ENCODE measurements at regions of chr21 and their contacts with region 1.

Region 1: DNA sequence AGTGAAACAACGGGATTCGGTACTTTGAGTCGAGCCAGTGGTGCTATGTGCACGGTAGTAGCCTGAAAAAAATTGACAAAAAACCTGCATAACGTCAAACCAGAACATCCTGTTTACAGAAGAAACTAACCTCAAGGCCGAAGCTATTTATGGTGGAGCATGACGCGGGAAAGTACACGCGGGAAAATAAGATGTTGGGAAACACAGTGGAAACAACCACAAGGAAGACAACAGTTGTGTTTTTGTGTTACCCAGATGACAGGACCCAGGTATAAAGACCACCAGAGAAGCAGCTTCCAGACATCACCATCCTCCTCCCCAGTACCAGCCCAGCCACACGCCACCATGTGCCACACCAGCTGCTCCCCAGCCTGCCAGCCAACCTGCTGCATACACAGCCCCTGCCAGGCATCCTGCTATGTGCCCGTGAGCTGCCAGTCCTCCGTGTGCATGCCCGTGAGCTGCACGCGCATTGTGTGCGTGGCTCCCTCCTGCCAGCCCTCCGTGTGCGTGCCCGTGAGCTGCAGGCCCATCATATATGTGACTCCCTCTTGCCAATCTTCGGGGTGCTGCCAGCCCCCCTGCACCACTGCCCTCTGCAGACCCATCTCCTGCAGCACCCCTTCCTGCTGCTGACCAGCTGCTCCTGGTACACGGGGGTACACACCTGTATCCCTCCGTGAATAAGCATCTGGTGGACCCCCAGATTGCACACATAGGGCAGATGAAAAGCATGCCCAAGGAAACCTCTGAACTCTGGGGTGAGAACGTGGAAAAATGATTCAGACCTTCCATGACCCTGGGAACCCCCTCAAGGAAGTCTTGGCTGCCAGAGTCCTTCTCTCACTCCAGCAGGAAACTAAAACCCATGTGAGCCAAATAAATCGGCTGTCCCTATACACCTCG is at the start of gene KRTAP12-3:
- DNase-seq: peak in 8 of 9 donors; percentile 39 to 92 (median 86)
- ATAC-seq: peak; percentile 83
- H3K4me3 ChIP-seq: peak within 1 kb of the TSS; percentile 46
- H3K4me3 Mint-ChIP-seq: peak within 1 kb of the TSS; percentile 63 to 87 (median 76)
- H3K27ac ChIP-seq: peak within 1 kb of the TSS; percentile 63
- H3K27ac Mint-ChIP-seq: peak within 1 kb of the TSS; percentile 87 to 98 (median 98)
- H3K4me1 ChIP-seq: peaks cover 55 to 64% of the 10 kb centered on the region in 2 donors
- H3K4me1 Mint-ChIP-seq: peaks cover 47 to 73% (median 69%) of the 10 kb centered on the region in 7 donors
- H3K27me3 ChIP-seq: no peaks in the 10 kb centered on the region
- H3K27me3 Mint-ChIP-seq: peaks cover 0 to 9% (median 0%) of the 10 kb centered on the region in 5 donors
- total RNA-seq, gene KRTAP12-3: 1.1 TPM in 1 of 5 experiments, not detected in the others

Region 2: DNA sequence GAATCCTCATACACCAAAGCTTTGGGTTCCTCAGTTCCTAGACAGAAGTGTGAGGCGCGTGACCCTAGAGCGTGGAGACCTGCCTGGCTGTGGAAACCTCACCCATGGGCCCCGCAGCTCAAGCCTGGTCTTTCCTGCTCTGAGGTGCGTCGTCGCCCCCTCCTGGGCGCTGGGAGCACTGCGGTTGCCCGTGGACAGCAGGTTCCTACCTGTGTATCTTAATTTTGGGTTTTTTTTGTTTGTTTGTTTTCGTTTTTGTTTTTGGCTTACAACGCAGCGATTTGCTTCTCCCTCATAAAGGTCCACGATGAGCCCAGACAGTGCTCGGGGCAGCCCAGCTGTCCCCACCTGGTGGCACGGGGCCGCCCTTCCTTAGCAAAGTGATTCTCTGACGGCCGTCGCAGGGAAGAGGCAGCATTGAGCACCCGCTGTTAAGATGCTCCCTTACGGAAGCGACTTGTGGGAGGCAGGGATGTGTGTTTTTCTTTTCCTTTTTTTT is 682.3 kb before region 1 on chr21:
- CTCF ChIA-PET with region 1: no interaction called
- POLR2A ChIA-PET with region 1: no interaction called
- intact Hi-C with region 1: no loop called
- DNase-seq: peak; percentile 70 to 87 (median 81)
- ATAC-seq: peak; percentile 95
- H3K4me3 ChIP-seq: no peak overlapping the region
- H3K4me3 Mint-ChIP-seq: no peak overlapping the region
- H3K27ac ChIP-seq: no peak overlapping the region
- H3K27ac Mint-ChIP-seq: peak overlapping the region in 6 of 9 donors; percentile 0 to 94 (median 58)
- H3K4me1 ChIP-seq: peaks cover 0 to 4% of the 10 kb centered on the region in 2 donors
- H3K4me1 Mint-ChIP-seq: peaks cover 11 to 17% (median 15%) of the 10 kb centered on the region in 7 donors
- H3K27me3 ChIP-seq: no peaks in the 10 kb centered on the region
- H3K27me3 Mint-ChIP-seq: no peaks in the 10 kb centered on the region

Region 3: GRCh38 chr21:44510508-44511210 is 147.2 kb before region 1 on chr21:
- CTCF ChIA-PET with region 1: interaction called, 3 read pairs
- POLR2A ChIA-PET with region 1: interaction called, 3 read pairs
- intact Hi-C with region 1: loop called in 1 of 2 experiments (anchors 2 kb)
- DNase-seq: peak; percentile 65 to 95 (median 85)
- ATAC-seq: peak; percentile 87
- H3K4me3 ChIP-seq: peak overlapping the region; percentile 64
- H3K4me3 Mint-ChIP-seq: peak overlapping the region in 9 of 10 donors; percentile 58 to 75 (median 65)
- H3K27ac ChIP-seq: no peak overlapping the region
- H3K27ac Mint-ChIP-seq: peak overlapping the region in 3 of 9 donors; percentile 6 to 41 (median 38)
- H3K4me1 ChIP-seq: peaks cover 7 to 13% of the 10 kb centered on the region in 2 donors
- H3K4me1 Mint-ChIP-seq: peaks cover 0 to 3% (median 0%) of the 10 kb centered on the region in 7 donors
- H3K27me3 ChIP-seq: no peaks in the 10 kb centered on the region
- H3K27me3 Mint-ChIP-seq: no peaks in the 10 kb centered on the region

Region 4: DNA sequence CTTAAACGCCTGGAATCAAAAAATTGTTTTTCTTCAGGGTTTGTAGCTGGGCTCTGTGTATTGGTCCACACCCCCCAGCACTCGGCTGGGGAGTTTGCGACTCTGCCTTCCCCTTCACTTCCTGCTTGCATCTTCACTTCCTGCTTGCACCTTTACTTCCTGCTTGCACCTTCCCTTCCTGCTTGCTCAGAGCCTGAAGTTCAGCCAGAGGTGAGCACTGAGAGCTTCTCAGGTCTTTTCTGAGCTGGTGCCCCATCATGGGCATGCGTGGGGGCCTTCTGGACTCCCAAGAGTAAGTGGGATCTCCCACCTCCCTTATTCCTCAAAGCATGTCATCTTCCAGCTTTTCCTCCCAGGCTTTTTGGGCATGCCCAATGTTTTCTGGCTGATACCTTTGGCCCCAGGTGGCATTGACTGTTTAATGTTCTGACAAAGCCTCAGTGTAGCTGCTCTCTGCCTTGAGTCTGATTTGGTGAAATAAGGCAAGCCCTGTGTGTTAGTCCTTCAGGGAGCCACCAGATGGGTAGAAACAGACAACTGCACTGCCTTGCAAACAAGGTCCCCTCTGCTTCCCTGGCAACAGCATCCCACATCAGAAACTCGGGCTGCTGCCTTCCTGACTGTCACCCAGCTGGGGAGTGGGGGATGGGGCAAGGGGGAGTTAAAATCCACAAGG is 110.1 kb before region 1 on chr21:
- CTCF ChIA-PET with region 1: no interaction called
- POLR2A ChIA-PET with region 1: interaction called, 5 read pairs
- intact Hi-C with region 1: loop called in 1 of 2 experiments (anchors 2 kb)
- DNase-seq: peak in 8 of 9 donors; percentile 16 to 73 (median 59)
- ATAC-seq: peak; percentile 74
- H3K4me3 ChIP-seq: peak overlapping the region; percentile 50
- H3K4me3 Mint-ChIP-seq: peak overlapping the region; percentile 75 to 86 (median 83)
- H3K27ac ChIP-seq: peak overlapping the region; percentile 56
- H3K27ac Mint-ChIP-seq: peak overlapping the region; percentile 85 to 99 (median 95)
- H3K4me1 ChIP-seq: peaks cover 15 to 19% of the 10 kb centered on the region in 2 donors
- H3K4me1 Mint-ChIP-seq: peaks cover 16 to 34% (median 30%) of the 10 kb centered on the region in 7 donors
- H3K27me3 ChIP-seq: no peaks in the 10 kb centered on the region
- H3K27me3 Mint-ChIP-seq: peaks cover 0 to 5% (median 0%) of the 10 kb centered on the region in 5 donors

Region 5: GRCh38 chr21:44583089-44583799 is 74.6 kb before region 1 on chr21:
- CTCF ChIA-PET with region 1: no interaction called
- POLR2A ChIA-PET with region 1: no interaction called
- intact Hi-C with region 1: loop called in 1 of 2 experiments (anchors 10 kb)
- DNase-seq: no peak
- ATAC-seq: no peak
- H3K4me3 ChIP-seq: no peak overlapping the region
- H3K4me3 Mint-ChIP-seq: peak overlapping the region in 1 of 10 donors; percentile 13
- H3K27ac ChIP-seq: no peak overlapping the region
- H3K27ac Mint-ChIP-seq: peak overlapping the region in 3 of 9 donors; percentile 17 to 62 (median 22)
- H3K4me1 ChIP-seq: peaks cover 0 to 8% of the 10 kb centered on the region in 2 donors
- H3K4me1 Mint-ChIP-seq: peaks cover 14 to 43% (median 34%) of the 10 kb centered on the region in 7 donors
- H3K27me3 ChIP-seq: no peaks in the 10 kb centered on the region
- H3K27me3 Mint-ChIP-seq: peaks cover 0 to 39% (median 25%) of the 10 kb centered on the region in 5 donors

Region 6: GRCh38 chr21:44618504-44618903 is 39.4 kb before region 1 on chr21:
- CTCF ChIA-PET with region 1: interaction called, 9 read pairs
- POLR2A ChIA-PET with region 1: interaction called, 23 read pairs
- intact Hi-C with region 1: loop called (anchors 1 kb)
- DNase-seq: no peak
- ATAC-seq: peak; percentile 36
- H3K4me3 ChIP-seq: peak overlapping the region; percentile 53
- H3K4me3 Mint-ChIP-seq: peak overlapping the region; percentile 47 to 86 (median 70)
- H3K27ac ChIP-seq: peak overlapping the region; percentile 59
- H3K27ac Mint-ChIP-seq: peak overlapping the region; percentile 83 to 96 (median 93)
- H3K4me1 ChIP-seq: peaks cover 37 to 45% of the 10 kb centered on the region in 2 donors
- H3K4me1 Mint-ChIP-seq: peaks cover 20 to 66% (median 60%) of the 10 kb centered on the region in 7 donors
- H3K27me3 ChIP-seq: no peaks in the 10 kb centered on the region
- H3K27me3 Mint-ChIP-seq: no peaks in the 10 kb centered on the region

Region 7: GRCh38 chr21:44697811-44698734 is 40.2 kb after region 1 on chr21:
- CTCF ChIA-PET with region 1: no interaction called
- POLR2A ChIA-PET with region 1: no interaction called
- intact Hi-C with region 1: loop called in 1 of 2 experiments (anchors 5 kb)
- DNase-seq: no peak
- ATAC-seq: no peak
- H3K4me3 ChIP-seq: no peak overlapping the region
- H3K4me3 Mint-ChIP-seq: peak overlapping the region in 1 of 10 donors; percentile 42
- H3K27ac ChIP-seq: no peak overlapping the region
- H3K27ac Mint-ChIP-seq: peak overlapping the region in 1 of 9 donors; percentile 36
- H3K4me1 ChIP-seq: no peaks in the 10 kb centered on the region
- H3K4me1 Mint-ChIP-seq: peaks cover 2 to 21% (median 12%) of the 10 kb centered on the region in 7 donors
- H3K27me3 ChIP-seq: peaks cover 0 to 3% of the 10 kb centered on the region in 2 donors
- H3K27me3 Mint-ChIP-seq: peaks cover 53 to 73% (median 54%) of the 10 kb centered on the region in 5 donors

Region 8: DNA sequence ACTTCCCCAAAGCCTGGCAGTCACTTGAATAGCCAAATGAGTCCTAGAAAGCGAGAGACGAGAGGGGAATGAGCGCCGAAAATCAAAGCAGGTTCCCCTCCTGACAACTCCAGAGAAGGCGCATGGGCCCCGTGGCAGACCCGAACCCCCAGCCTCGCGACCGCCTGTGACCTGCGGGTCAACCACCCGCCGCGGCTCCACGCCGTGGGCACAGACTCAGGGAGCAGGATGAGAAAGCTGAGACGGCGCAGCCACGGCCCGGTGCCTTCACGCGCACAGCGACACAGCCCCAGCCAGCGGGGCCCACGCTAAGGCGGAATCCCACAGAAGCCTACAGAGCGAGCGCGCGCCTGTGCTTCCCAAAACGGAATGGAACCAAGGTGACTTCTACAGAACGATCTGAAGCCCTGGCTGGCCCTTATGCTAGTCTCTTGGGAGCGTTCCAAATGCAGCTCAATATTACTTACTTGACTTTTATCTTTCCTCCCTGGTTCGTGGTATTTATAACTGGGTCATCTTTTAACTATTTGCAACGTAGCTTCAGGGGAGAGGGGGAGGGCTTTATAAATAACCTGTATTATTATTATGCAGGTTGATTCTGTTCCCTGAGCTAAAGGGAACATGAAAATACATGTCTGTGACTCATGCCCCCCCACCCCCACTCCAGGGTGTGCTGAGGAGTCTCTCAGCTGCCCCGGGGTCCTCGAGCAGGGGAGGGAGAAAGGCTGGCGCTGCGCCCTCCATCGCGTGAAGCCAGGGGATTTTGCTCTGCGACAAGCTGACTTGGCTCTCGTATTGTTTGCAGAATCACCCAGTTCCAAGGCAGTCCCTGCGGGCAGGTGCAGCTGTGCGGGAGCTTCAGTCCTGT is 51.8 kb after region 1 on chr21:
- CTCF ChIA-PET with region 1: no interaction called
- POLR2A ChIA-PET with region 1: interaction called, 3 read pairs
- intact Hi-C with region 1: loop called in 1 of 2 experiments (anchors 1 kb)
- DNase-seq: peak in 2 of 9 donors; percentile 13 to 32
- ATAC-seq: peak; percentile 58
- H3K4me3 ChIP-seq: peak overlapping the region; percentile 20
- H3K4me3 Mint-ChIP-seq: peak overlapping the region; percentile 39 to 82 (median 72)
- H3K27ac ChIP-seq: no peak overlapping the region
- H3K27ac Mint-ChIP-seq: peak overlapping the region in 2 of 9 donors; percentile 9 to 23
- H3K4me1 ChIP-seq: peaks cover 25 to 34% of the 10 kb centered on the region in 2 donors
- H3K4me1 Mint-ChIP-seq: peaks cover 9 to 46% (median 27%) of the 10 kb centered on the region in 7 donors
- H3K27me3 ChIP-seq: peaks cover 8 to 32% of the 10 kb centered on the region in 2 donors
- H3K27me3 Mint-ChIP-seq: peaks cover 70 to 93% (median 79%) of the 10 kb centered on the region in 5 donors

Region 9: DNA sequence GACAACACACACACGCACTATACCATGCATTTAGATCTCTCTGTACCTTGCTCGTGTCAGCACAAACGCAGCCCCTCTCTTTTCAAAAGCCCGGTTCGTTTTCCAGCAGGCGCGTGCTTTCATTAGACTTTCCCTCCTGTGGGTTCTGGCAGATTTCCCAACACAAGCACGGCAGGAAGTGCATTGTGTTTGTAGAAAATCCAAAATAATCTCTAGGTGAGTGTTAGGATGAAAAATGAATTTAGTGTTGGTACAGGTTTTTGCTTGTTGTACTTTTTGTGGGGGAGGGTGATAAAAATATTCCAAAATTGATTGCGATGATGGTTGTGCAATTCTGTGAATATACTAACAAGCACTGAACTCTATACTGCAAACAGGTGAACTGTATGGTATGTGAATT is 683.9 kb after region 1 on chr21:
- CTCF ChIA-PET with region 1: no interaction called
- POLR2A ChIA-PET with region 1: no interaction called
- intact Hi-C with region 1: no loop called
- DNase-seq: no peak
- ATAC-seq: no peak
- H3K4me3 ChIP-seq: no peak overlapping the region
- H3K4me3 Mint-ChIP-seq: no peak overlapping the region
- H3K27ac ChIP-seq: no peak overlapping the region
- H3K27ac Mint-ChIP-seq: no peak overlapping the region
- H3K4me1 ChIP-seq: no peaks in the 10 kb centered on the region
- H3K4me1 Mint-ChIP-seq: peaks cover 0 to 5% (median 0%) of the 10 kb centered on the region in 7 donors
- H3K27me3 ChIP-seq: no peaks in the 10 kb centered on the region
- H3K27me3 Mint-ChIP-seq: peaks cover 4 to 18% (median 7%) of the 10 kb centered on the region in 5 donors